Activated CD4-positive, alpha-beta memory T cell treated with anti-CD3 and anti-CD28 coated beads for 36 hours (primary cell): ENCODE measurements at regions of chr22 and their contacts with region 1.

Region 1: GRCh38 chr22:37608477-37609239 is at the start of gene GGA1:
- DNase-seq: peak; percentile 97
- H3K4me3 Mint-ChIP-seq: peak within 1 kb of the TSS; percentile 87
- H3K27ac Mint-ChIP-seq: peak within 1 kb of the TSS; percentile 99
- H3K4me1 Mint-ChIP-seq: peaks cover 54% of the 10 kb centered on the region
- H3K27me3 Mint-ChIP-seq: no peaks in the 10 kb centered on the region
- total RNA-seq, gene GGA1: 59.0 to 61.1 TPM

Region 2: GRCh38 chr22:37544955-37545699 is 63.5 kb before region 1 on chr22:
- CTCF ChIA-PET with region 1: interaction called, 26 read pairs
- POLR2A ChIA-PET with region 1: no interaction called
- intact Hi-C with region 1: no loop called
- DNase-seq: peak; percentile 83
- H3K4me3 Mint-ChIP-seq: no peak overlapping the region
- H3K27ac Mint-ChIP-seq: no peak overlapping the region
- H3K4me1 Mint-ChIP-seq: peaks cover 28% of the 10 kb centered on the region
- H3K27me3 Mint-ChIP-seq: peaks cover 12% of the 10 kb centered on the region

Region 3: GRCh38 chr22:37588546-37589215 is 20.0 kb before region 1 on chr22:
- CTCF ChIA-PET with region 1: interaction called, 152 read pairs
- POLR2A ChIA-PET with region 1: interaction called, 16 read pairs
- intact Hi-C with region 1: loop called (anchors 1 kb)
- DNase-seq: no peak
- H3K4me3 Mint-ChIP-seq: no peak overlapping the region
- H3K27ac Mint-ChIP-seq: no peak overlapping the region
- H3K4me1 Mint-ChIP-seq: peaks cover 10% of the 10 kb centered on the region
- H3K27me3 Mint-ChIP-seq: peaks cover 3% of the 10 kb centered on the region

Region 4: DNA sequence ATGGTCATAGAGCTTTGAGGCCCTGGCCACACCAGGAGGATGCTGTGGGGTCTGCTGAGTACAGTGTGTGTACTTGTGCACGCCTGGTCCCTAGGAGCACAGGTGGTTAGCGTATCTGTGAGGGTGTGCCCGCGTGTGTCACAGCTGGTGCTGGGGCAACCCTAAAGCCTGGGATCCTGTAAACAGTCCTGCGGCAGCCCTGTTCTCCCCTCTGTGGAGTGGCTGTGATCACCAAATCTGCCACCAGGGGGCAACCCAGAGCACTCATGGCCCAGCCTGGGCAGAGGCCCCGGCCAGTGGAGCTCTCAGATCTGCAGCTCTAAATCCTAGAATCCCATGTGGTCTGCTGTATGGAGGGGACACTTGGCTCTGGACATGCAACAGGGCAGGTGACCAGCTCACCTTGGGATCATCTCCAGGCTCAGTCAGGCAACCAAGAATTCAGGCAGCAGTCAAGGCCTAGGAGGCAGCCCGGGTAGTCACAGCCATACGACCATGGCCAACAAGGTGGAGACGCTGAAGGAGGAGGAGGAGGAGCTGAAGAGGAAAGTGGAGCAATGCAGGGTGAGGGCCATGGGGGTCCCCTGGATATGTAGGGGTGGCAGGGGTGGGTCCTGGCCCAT is 34.7 kb after region 1 on chr22:
- CTCF ChIA-PET with region 1: interaction called, 85 read pairs
- POLR2A ChIA-PET with region 1: interaction called, 15 read pairs
- intact Hi-C with region 1: no loop called
- DNase-seq: peak; percentile 91
- H3K4me3 Mint-ChIP-seq: peak overlapping the region; percentile 29
- H3K27ac Mint-ChIP-seq: peak overlapping the region; percentile 76
- H3K4me1 Mint-ChIP-seq: peaks cover 32% of the 10 kb centered on the region
- H3K27me3 Mint-ChIP-seq: no peaks in the 10 kb centered on the region

Region 5: GRCh38 chr22:37686002-37686982 is 77.6 kb after region 1 on chr22 and contains the start of gene NOL12:
- CTCF ChIA-PET with region 1: interaction called, 50 read pairs
- POLR2A ChIA-PET with region 1: interaction called, 4 read pairs
- intact Hi-C with region 1: loop called (anchors 1 kb)
- DNase-seq: peak; percentile 86
- H3K4me3 Mint-ChIP-seq: peak within 1 kb of the TSS; percentile 98
- H3K27ac Mint-ChIP-seq: peak within 1 kb of the TSS; percentile 94
- H3K4me1 Mint-ChIP-seq: peaks cover 26% of the 10 kb centered on the region
- H3K27me3 Mint-ChIP-seq: no peaks in the 10 kb centered on the region
- total RNA-seq, gene NOL12: 32.5 to 33.3 TPM

Region 6: DNA sequence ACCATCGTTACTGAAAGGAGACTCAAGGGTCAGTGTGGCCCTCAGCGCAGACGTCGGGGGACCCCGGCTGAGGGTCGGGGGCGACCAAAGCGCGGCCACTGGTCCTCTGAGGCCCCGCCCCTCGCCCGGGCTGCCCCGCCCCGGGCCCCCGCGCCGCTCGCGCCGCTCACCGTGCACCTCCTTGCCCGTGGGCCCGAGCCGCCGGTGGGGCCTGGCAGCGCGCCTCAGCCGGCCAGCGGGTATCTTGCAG is 235.0 kb after region 1 on chr22:
- CTCF ChIA-PET with region 1: no interaction called
- POLR2A ChIA-PET with region 1: no interaction called
- intact Hi-C with region 1: loop called (anchors 5 kb)
- DNase-seq: peak; percentile 60
- H3K4me3 Mint-ChIP-seq: peak overlapping the region; percentile 84
- H3K27ac Mint-ChIP-seq: peak overlapping the region; percentile 87
- H3K4me1 Mint-ChIP-seq: peaks cover 26% of the 10 kb centered on the region
- H3K27me3 Mint-ChIP-seq: no peaks in the 10 kb centered on the region